BJ (cell line): ENCODE measurements at regions of chr1 and their contacts with region 1.

Region 1: DNA sequence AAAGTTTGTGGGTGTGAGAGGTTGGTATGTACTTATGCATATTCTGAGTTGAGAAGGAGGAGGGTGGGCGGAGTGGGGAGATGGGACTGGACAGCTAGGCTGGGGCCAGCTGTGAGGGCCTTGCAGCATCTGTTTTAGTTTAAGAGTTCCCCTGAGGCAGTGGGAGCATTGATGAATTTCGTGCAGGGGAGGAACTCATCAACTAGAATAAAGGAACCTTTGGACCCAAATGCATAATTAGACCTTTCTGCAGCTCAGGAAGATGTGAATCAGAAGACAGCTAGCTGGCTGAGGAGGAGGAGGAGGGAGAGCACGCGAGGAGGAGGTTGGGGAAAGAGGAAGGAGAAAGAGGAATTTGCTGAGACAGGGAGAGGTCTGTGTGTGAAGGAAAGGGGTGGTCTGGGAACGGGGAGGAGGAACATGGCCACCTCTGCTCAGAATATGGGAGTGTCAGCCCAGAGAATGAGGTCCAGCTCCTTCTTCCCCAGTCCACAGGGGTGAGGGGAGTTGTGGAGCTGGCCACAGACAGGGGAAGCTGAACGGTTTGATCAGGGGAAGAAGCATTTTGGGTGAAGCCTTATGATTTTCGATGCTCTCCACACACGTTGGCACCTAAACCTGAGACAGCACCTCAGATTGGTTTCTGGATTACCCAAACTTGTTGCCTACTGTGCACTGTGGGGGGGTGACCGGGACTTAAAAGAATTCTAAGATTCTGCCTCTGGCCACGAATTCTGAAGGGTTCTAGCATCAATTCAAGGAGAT is 27.7 kb downstream of the MYOG start:
- DNase-seq: peak; percentile 90
- H3K4me3 ChIP-seq: no peak overlapping the region
- H3K27me3 ChIP-seq: no peaks in the 10 kb centered on the region
- CTCF ChIP-seq: no peak

Region 2: DNA sequence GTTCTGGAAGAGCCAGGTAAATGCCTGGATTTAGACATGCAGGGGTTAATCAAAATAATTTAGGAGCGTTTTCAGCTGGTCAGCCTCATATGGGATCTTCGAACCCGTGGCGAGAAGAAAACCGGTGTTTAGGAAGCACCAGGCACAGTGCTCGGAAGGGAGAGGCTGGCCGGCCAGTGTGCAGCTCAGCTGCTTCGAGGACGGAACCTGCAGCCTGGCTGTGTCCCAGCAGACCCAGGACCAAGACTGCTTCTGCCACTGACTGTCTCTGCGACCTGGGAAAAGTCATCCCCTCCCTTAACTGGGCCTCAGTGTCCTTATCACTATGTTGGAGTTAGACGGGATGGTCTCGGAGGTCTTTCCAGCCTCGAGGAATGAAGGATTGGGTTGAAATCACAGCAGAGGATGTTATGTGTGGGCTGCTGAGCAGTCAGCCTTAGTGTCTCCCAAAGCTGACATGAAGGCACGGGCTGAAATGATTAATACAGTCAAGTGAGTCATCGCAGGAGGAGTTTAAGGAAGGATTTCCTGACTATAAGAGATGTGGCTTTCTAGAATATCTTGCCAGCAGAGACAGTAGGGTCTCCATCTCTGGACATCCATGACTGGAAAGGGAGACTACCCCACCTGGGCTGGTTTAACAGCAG is 11.0 kb before region 1 on chr1:
- CTCF ChIA-PET with region 1: interaction called, 105 read pairs
- POLR2A ChIA-PET with region 1: no interaction called
- DNase-seq: peak; percentile 35
- H3K4me3 ChIP-seq: no peak overlapping the region
- H3K27me3 ChIP-seq: no peaks in the 10 kb centered on the region
- CTCF ChIP-seq: no peak

Region 3: DNA sequence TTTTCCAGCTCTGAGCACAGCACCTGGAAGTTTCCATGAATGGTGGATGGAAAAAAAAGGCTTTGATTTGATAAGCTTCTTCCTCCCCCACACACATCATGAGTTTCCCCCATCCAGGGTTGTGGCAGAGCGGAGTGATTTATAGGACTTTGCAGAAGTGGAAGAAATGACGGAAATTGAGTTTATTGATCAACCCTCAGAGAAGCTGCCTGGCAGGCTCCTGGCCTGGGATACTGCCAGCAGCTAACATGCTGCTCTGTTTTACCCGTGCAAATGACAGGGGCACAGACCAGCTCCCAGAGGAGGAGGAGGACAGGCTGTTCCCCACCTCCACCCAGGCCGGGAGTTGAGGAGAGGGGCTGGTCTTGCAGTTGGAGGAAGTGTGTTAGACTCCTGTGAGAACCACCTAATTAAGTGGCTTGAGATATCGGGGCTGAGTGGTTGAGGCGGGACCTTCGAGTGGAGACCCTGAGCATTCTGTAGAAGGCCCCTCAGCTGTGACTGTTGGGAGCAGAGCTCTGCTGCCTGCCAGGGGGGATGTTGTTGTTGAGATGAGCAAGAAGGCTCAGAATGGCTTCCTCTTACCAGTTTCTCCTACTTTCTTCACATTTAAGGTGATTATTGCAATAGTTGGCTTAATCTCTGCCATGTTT is 91.2 kb after region 1 on chr1:
- CTCF ChIA-PET with region 1: no interaction called
- POLR2A ChIA-PET with region 1: no interaction called
- DNase-seq: no peak
- H3K4me3 ChIP-seq: no peak overlapping the region
- H3K27me3 ChIP-seq: no peaks in the 10 kb centered on the region
- CTCF ChIP-seq: no peak